Left cardiac atrium (tissue), 4 donors: ENCODE measurements at regions of chr11 and their contacts with region 1.

Region 1: DNA sequence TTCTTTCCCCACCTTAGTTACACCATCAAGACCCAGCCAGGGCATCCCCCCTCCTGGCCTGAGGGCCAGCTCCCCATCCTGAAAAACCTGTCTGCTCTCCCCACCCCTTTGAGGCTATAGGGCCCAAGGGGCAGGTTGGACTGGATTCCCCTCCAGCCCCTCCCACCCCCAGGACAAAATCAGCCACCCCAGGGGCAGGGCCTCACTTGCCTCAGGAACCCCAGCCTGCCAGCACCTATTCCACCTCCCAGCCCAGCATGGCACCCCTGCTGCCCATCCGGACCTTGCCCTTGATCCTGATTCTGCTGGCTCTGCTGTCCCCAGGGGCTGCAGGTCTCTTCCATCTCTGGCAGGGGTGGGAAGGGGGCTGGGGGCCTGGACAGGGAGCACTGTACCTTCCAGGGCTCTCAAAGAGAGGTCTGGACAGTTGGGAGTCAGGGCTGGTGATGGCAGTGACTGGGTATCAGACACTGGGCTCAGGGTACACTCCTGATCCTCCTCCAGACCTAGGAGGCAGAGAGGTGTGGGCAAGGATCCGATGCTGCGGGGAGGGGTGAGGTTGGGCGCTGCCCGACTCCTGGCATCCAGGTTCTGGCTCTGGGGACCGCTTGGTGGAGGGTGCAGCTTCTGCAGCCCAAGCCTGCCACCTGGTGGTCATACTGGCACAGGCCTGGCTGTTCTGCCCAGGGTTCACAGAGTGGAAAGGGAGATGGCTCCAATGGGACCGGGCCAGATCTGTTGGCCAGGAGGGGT is at the start of gene UPK2:
- DNase-seq: peak; percentile 91
- ATAC-seq: peak; percentile 97 to 99
- total RNA-seq, gene UPK2: not detected

Region 2: GRCh38 chr11:118522571-118523072 is 433.6 kb before region 1 on chr11:
- intact Hi-C with region 1: no loop called
- DNase-seq: no peak
- ATAC-seq: peak; percentile 67 to 69

Region 3: GRCh38 chr11:118689851-118690552 is 266.3 kb before region 1 on chr11:
- intact Hi-C with region 1: loop called (anchors 2 to 10 kb)
- DNase-seq: peak; percentile 86
- ATAC-seq: peak; percentile 96

Region 4: DNA sequence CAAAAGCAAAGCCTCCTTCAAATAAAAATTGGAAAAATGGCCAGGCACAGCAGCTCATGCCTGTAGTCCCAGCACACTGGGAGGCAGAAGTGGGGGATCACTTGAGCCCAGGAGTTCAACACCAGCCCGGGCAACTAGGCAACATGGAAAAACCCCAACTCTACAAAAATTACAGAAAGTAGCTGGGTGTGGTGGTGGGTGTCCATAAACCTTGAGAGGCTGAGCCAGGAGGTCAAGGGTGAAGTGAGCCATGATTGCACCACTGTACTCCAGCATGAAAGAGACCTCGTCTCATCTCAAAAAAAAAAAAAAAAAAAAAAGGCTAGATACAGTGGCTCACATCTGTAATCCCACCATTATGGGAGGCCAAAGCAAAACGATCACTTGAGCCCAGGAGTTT is 187.6 kb before region 1 on chr11:
- intact Hi-C with region 1: no loop called
- DNase-seq: no peak
- ATAC-seq: no peak

Region 5: GRCh38 chr11:118907051-118908042 is 48.9 kb before region 1 on chr11:
- intact Hi-C with region 1: loop called in 1 of 2 experiments (anchors 2 kb)
- DNase-seq: peak; percentile 83
- ATAC-seq: peak; percentile 21 to 40

Region 6: GRCh38 chr11:119460582-119460981 is 504.3 kb after region 1 on chr11:
- intact Hi-C with region 1: no loop called
- DNase-seq: no peak
- ATAC-seq: peak; percentile 44 to 68